Activated CD8-positive, alpha-beta memory T cell treated with anti-CD3 and anti-CD28 coated beads, Interleukin-2, amount 10 ng/mL, durations not matched to agents 7 days and 5 days (primary cell): ENCODE measurements at regions of chr1 and their contacts with region 1.

Region 1: DNA sequence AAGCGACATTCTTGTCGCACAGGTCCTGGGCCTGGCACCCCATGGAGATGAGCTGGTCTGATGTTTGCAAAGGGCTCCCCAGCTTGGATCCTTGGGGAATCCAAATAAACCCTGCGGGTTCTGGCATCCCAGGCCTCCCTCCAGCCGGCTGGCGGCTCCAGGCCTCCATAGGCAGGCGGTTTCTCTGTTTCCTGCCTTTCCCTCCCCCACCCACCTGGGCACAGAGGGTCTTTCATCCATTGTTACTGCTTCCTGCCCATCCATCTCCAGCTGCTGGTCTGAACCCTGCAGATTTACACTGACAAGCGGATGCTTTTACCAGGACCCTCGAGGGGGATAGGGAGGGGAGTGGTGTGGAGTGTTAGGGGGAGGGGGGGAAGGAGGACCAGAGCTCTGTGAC is 39.1 kb upstream of the ID3 start:
- DNase-seq: no peak
- ATAC-seq: no peak
- H3K4me3 Mint-ChIP-seq: no peak overlapping the region
- H3K27ac Mint-ChIP-seq: no peak overlapping the region
- H3K4me1 Mint-ChIP-seq: peaks cover 70% of the 10 kb centered on the region
- H3K27me3 Mint-ChIP-seq: no peaks in the 10 kb centered on the region

Region 2: DNA sequence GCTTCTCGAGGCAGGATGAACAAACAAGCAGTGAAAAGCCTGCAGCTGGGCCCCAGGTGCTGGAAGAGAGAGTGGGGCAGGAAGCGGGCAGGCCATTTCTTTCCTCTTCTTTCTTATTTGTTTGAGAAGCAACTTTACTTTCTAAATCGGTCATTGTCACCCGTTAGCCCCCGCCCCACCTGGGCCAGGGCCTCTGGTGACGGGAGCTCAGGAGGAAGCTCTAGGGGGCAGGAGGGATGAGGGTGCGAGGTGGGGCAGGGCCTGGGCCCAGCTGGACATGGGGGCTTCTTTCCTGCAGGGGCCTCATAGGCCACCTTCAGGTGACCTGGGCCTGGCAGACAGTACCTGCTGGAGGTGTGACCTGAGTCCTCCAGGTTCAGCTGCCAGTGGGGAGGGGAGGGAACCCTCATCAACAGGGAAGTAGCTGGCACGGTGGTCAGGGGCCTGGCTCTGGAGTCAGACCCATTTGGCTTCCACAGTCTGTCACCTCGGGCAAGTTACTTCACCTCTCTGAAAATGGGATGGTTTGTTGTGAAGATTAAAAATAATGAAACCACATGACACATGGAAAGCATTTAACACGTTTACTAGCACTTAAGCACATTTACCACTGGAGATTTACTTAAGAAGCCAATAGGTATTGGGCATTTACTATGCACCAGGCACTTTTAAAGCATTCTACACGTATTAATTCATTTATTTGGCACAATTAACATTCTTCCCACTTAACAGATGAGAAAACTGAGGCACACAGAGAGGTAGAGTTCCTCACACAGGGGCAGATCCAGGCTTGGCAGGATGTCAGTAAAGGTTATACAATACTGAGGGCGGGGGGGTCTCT is 15.0 kb after region 1 on chr1:
- CTCF ChIA-PET with region 1: interaction called, 22 read pairs
- DNase-seq: peak; percentile 81
- ATAC-seq: peak; percentile 79
- H3K4me3 Mint-ChIP-seq: no peak overlapping the region
- H3K27ac Mint-ChIP-seq: peak overlapping the region; percentile 85
- H3K4me1 Mint-ChIP-seq: peaks cover 36% of the 10 kb centered on the region
- H3K27me3 Mint-ChIP-seq: peaks cover under 1% of the 10 kb centered on the region